Colonic mucosa (tissue), 4 donors: ENCODE measurements at regions of chr12 and their contacts with region 1.

Region 1: DNA sequence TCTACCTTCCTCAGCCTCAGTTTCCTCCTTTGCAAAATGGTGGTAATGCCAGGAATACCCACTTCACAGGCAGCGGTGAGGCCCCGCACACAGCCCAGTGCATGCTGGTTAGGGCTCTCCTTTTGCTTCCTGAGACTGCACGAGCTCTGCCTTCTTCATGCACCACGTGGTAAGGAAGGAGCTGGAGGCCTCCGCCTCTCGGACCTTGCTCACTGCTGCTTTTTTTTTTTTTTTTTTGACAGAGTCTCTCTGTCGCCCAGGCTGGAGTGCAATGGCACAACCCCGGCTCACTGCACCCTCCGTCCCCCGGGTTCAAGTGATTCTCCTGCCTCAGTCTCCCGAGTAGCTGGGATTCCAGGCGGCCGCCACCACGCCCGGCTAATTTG is 18.1 kb downstream of the TAMALIN start:
- DNase-seq: peak; percentile 90
- H3K4me3 ChIP-seq: peak overlapping the region; percentile 14
- H3K27ac ChIP-seq: peak overlapping the region; percentile 92
- H3K4me1 ChIP-seq: peaks cover 8% of the 10 kb centered on the region
- H3K27me3 ChIP-seq: no peaks in the 10 kb centered on the region
- CTCF ChIP-seq: no peak

Region 2: GRCh38 chr12:51752234-51752889 is 272.5 kb before region 1 on chr12:
- intact Hi-C with region 1: no loop called
- DNase-seq: peak; percentile 44
- H3K4me3 ChIP-seq: no peak overlapping the region
- H3K27ac ChIP-seq: no peak overlapping the region
- H3K4me1 ChIP-seq: peaks cover 3% of the 10 kb centered on the region
- H3K27me3 ChIP-seq: no peaks in the 10 kb centered on the region
- CTCF ChIP-seq: no peak

Region 3: GRCh38 chr12:52082988-52083637 is 58.3 kb after region 1 on chr12:
- intact Hi-C with region 1: loop called (anchors 1 kb)
- DNase-seq: peak; percentile 64
- H3K4me3 ChIP-seq: no peak overlapping the region
- H3K27ac ChIP-seq: no peak overlapping the region
- H3K4me1 ChIP-seq: no peaks in the 10 kb centered on the region
- H3K27me3 ChIP-seq: no peaks in the 10 kb centered on the region
- CTCF ChIP-seq: peak; percentile 97

Region 4: GRCh38 chr12:52681526-52682380 is 656.9 kb after region 1 on chr12:
- intact Hi-C with region 1: no loop called
- DNase-seq: no peak
- H3K4me3 ChIP-seq: no peak overlapping the region
- H3K27ac ChIP-seq: no peak overlapping the region
- H3K4me1 ChIP-seq: no peaks in the 10 kb centered on the region
- H3K27me3 ChIP-seq: no peaks in the 10 kb centered on the region
- CTCF ChIP-seq: no peak